ENCODE measurements at regions of chr2 and their contacts with region 1.

Region 1: DNA sequence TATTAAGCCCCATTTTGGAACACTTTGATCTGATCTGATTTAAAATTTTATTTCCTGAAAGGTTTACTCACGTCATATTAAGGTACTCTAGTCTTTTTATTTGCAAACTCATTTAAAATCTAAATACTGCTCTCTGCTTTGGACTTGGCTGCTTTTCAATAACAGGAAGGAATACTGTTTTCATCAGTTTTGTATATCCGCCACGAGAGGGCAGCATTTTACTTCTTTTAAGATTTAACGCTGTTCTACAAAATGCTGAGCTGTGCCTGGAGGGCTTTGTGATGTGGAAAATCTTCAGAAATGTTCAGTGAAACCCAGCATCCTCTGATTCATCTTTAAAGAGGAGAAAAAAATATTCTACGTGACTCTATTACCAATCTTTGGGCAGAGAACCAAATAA is 37.5 kb upstream of the SLC38A11 start:
- DNase-seq: peak; percentile 16
- H3K4me3 Mint-ChIP-seq: no peak overlapping the region
- H3K27ac Mint-ChIP-seq: no peak overlapping the region
- H3K4me1 Mint-ChIP-seq: peaks cover 29% of the 10 kb centered on the region
- H3K27me3 Mint-ChIP-seq: no peaks in the 10 kb centered on the region

Region 2: DNA sequence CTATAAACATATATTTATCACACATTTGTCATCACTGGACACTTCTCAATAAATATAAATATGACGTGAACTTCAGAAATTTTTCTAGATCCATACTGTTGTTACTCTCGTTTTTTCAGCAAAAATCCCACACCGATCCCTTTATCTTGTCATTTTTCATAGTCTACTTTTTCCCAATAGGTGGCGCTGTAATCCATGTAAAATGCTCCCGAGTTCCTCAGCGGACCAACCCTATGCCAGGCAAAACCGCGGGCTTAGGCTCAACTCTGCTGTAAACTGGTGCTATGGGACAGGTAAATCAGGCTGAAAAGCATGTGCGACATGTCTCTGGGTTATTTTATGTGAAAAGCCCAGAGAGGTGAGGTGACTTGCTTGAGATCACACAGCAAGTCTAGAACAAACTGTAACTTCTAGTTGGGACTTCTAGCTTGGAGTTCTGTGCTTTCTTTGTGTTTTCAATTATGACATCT is 255.2 kb before region 1 on chr2:
- intact Hi-C with region 1: loop called (anchors 10 kb)
- DNase-seq: peak; percentile 9
- H3K4me3 Mint-ChIP-seq: no peak overlapping the region
- H3K27ac Mint-ChIP-seq: no peak overlapping the region
- H3K4me1 Mint-ChIP-seq: peaks cover 2% of the 10 kb centered on the region
- H3K27me3 Mint-ChIP-seq: peaks cover 20% of the 10 kb centered on the region

Region 3: GRCh38 chr2:165015052-165015642 is 22.3 kb after region 1 on chr2:
- intact Hi-C with region 1: loop called (anchors 2 kb)
- DNase-seq: peak; percentile 33
- H3K4me3 Mint-ChIP-seq: no peak overlapping the region
- H3K27ac Mint-ChIP-seq: no peak overlapping the region
- H3K4me1 Mint-ChIP-seq: no peaks in the 10 kb centered on the region
- H3K27me3 Mint-ChIP-seq: peaks cover 2% of the 10 kb centered on the region

Region 4: DNA sequence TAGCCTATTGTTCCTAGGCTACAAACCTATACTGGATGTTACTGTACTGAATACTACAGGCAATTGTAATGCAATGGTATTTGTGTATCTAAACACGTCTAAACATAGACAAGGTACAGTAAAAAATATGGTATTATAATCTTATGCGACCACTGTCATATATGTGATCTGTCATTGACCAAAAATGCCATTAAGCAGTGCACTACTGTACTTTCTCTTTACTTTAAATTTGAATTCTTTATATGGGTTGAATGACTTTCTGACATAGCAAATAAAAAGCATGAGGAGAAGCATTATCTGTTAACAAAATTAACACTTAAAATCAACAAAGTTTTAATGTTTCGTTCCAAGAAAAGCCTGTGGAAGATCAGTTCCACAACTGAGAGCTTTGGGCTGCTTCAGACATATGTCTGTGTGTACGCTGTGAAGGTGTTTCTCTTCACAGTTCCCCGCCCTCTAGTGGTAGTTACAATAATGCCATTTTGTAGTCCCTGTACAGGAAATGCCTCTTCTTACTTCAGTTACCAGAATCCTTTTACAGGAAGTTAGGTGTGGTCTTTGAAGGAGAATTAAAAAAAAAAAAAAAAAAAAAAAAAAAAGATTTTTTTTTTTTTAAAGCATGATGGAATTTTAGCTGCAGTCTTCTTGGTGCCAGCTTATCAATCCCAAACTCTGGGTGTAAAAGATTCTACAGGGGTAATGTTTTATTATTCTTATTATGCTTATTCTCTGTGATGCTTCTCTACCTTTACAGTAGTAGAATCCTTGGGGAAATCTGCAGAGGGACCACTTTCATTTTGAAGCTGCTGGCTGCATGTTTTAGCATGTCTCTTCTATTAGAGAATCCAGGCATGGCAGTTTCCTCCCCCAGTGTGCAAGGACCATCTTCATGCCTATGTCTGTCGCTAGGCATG is 300.9 kb after region 1 on chr2:
- intact Hi-C with region 1: loop called (anchors 2 kb)
- DNase-seq: peak; percentile 39
- H3K4me3 Mint-ChIP-seq: no peak overlapping the region
- H3K27ac Mint-ChIP-seq: no peak overlapping the region
- H3K4me1 Mint-ChIP-seq: peaks cover 2% of the 10 kb centered on the region
- H3K27me3 Mint-ChIP-seq: peaks cover 9% of the 10 kb centered on the region

Measured in activated T-helper 2 cell treated with anti-CD3 and anti-CD28 coated beads, Interferon-gamma antibody, Interleukin-2, Interleukin-4, amounts not matched to agents 10 μg/mL and 5 μg/mL and 100 μg/mL, durations not matched to agents 14 hours and 24 hours and 36 hours (primary cell).